Kidney (tissue), 22 donors: ENCODE measurements at regions of chr2 and their contacts with region 1.

Region 1: DNA sequence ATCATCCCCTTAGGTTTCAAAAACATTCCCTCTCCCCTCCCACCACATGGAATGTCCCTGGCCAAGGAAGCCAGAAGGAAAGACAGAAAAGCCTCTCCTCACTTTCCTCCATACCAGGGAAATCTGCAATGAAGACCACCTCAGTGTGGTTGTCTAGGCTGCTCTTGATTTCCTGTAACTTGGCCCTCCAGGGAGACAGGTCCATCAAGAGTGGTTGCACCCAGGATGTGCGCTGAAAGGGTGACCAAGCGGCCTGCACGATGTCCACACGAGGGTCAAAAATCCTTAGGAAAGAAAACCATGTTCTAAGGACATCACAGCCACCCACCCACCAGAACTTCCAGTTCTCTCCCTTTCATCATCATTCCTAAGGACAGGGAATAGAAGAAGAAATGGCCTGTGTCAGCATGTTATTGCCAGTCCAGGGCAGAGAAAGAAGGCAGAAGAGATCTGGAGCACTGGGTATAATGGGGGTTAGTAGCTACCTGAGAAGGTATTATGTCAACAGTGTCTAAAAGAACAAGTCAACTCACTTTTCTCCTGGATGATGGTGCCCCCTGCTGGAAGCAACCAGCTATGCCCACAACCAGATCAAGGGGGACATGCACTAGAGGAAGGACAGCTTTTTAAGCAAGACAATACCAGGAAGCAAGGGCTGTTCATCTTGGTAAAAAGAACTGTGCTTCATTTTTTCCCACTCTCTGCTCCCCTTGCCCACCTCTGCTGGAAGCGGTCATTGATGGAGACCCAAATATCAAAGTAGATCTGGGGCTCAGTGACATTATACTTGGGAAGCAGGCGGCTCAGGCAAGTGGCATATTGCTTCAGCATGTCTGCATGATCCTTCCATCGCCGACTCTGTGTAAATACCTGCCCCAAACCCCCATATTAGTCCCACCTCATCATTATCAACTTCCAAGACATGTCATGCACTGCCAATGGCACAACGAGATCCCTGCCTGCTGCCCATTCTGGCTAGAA is 9.3 kb downstream of the GGCX start:
- DNase-seq: peak; percentile 87 to 91 (median 88)
- H3K4me3 ChIP-seq: no peak overlapping the region
- H3K27ac ChIP-seq: no peak overlapping the region
- H3K4me1 ChIP-seq: peaks cover 0 to 8% (median 0%) of the 10 kb centered on the region in 3 donors
- H3K27me3 ChIP-seq: no peaks in the 10 kb centered on the region
- CTCF ChIP-seq: peak; percentile 96

Region 2: GRCh38 chr2:85420536-85421259 is 131.3 kb before region 1 on chr2:
- intact Hi-C with region 1: loop called (anchors 5 kb)
- DNase-seq: peak; percentile 91 to 95 (median 94)
- H3K4me3 ChIP-seq: peak overlapping the region; percentile 10 to 53 (median 22)
- H3K27ac ChIP-seq: peak overlapping the region; percentile 38 to 66
- H3K4me1 ChIP-seq: peaks cover 0 to 22% (median 16%) of the 10 kb centered on the region in 3 donors
- H3K27me3 ChIP-seq: no peaks in the 10 kb centered on the region
- CTCF ChIP-seq: peak; percentile 99

Region 3: GRCh38 chr2:85490861-85491755 is 60.9 kb before region 1 on chr2:
- intact Hi-C with region 1: no loop called
- DNase-seq: no peak
- H3K4me3 ChIP-seq: no peak overlapping the region
- H3K27ac ChIP-seq: no peak overlapping the region
- H3K4me1 ChIP-seq: no peaks in the 10 kb centered on the region
- H3K27me3 ChIP-seq: no peaks in the 10 kb centered on the region
- CTCF ChIP-seq: no peak

Region 4: GRCh38 chr2:85888684-85889626 is 337.0 kb after region 1 on chr2 and contains the start of gene ST3GAL5:
- intact Hi-C with region 1: no loop called
- DNase-seq: peak; percentile 89 to 97 (median 93)
- H3K4me3 ChIP-seq: peak within 1 kb of the TSS; percentile 62 to 95 (median 86)
- H3K27ac ChIP-seq: peak within 1 kb of the TSS; percentile 40 to 62
- H3K4me1 ChIP-seq: peaks cover 4 to 20% (median 8%) of the 10 kb centered on the region in 3 donors
- H3K27me3 ChIP-seq: no peaks in the 10 kb centered on the region
- CTCF ChIP-seq: peak; percentile 61
- total RNA-seq, gene ST3GAL5: 14.6 TPM